ENCODE measurements at regions of chr1 and their contacts with region 1.

Region 1: GRCh38 chr1:98723574-98723973 is 62.1 kb downstream of the SNX7 start:
- DNase-seq: no peak
- H3K4me3 ChIP-seq: no peak overlapping the region
- H3K27ac ChIP-seq: no peak overlapping the region
- H3K4me1 ChIP-seq: no peaks in the 10 kb centered on the region
- H3K27me3 ChIP-seq: no peaks in the 10 kb centered on the region
- CTCF ChIP-seq: no peak
- POLR2A ChIP-seq: no peak

Region 2: DNA sequence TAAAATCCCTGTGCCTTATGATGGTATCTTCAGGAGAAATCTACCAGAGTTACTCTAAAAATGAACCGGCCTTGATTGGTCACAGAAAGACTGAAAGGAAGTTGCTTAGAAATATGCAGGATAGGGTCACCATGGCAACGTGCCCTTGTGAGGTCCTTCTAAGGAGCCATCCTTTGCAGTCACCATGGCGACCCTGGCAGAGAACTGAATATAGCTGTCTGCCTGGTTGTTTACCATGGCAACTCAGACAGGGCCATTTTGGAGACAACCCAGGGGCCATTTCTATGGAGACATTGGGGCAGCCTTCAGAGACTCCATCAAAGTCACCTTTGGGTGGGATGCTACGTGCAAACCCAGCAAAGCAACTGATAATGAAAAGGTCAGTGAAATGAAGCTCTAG is 19.1 kb before region 1 on chr1:
- intact Hi-C with region 1: loop called (anchors 2 kb)
- DNase-seq: no peak
- H3K4me3 ChIP-seq: no peak overlapping the region
- H3K27ac ChIP-seq: no peak overlapping the region
- H3K4me1 ChIP-seq: no peaks in the 10 kb centered on the region
- H3K27me3 ChIP-seq: no peaks in the 10 kb centered on the region
- CTCF ChIP-seq: no peak
- POLR2A ChIP-seq: no peak

Measured in breast epithelium (tissue), 4 donors.